MCF 10A (cell line): ENCODE measurements at regions of chr5 and their contacts with region 1.

Region 1: DNA sequence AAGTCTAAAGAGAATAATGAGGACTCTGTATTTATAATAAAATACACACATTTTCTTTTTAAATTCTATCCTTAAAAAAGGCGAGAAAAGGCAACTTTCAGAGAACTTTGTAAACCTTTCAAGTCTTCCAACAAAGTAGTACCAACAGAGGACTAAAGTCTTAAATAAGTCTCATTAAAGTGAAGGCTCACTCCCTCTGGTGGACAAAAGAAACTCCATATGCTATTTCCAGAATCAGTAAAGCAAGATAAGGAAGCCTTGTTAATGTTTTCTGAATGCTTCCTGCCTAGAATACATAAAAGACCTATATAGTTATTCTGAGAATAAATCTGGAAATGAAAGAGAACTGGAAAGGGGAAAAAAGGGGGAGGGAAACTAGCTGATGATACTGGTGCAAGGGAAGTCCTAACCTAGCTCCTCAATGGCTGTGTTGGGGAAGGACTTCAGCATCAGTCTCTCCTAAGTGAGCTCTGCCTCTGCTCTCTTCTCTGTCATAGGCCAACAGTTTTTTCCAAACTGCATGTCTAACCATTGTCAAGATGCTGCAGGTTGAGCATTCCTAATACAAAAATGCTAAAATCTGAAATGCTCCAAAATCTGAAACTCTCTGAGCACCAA is 7.2 kb downstream of the HMGCS1 start:
- DNase-seq: peak; percentile 68
- H3K4me3 Mint-ChIP-seq: no peak overlapping the region
- H3K27ac Mint-ChIP-seq: peak overlapping the region; percentile 54
- H3K4me1 Mint-ChIP-seq: peaks cover 50% of the 10 kb centered on the region
- H3K27me3 Mint-ChIP-seq: no peaks in the 10 kb centered on the region
- CTCF ChIP-seq: peak; percentile 69

Region 2: DNA sequence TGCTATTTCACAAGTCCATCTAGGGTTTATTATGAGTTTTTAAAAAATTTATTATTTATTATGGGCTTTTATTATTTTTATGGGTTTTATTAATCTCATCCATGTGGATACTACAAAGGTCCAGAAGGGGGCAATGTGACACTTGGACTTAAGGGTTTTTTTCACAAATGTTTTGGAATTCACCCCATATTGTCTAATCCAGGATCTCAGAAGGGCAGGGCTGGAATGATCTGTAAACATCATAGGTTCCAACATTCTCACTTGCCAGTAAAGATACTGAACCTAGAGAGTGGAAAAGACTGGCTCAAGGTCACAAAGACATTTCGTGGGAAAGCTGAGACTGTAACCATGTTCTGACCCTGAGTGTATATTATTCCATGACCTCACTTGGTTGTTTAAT is 78.4 kb before region 1 on chr5:
- CTCF ChIA-PET with region 1: interaction called, 10 read pairs
- POLR2A ChIA-PET with region 1: no interaction called
- intact Hi-C with region 1: loop called (anchors 1 kb)
- DNase-seq: peak; percentile 67
- H3K4me3 Mint-ChIP-seq: no peak overlapping the region
- H3K27ac Mint-ChIP-seq: no peak overlapping the region
- H3K4me1 Mint-ChIP-seq: peaks cover 4% of the 10 kb centered on the region
- H3K27me3 Mint-ChIP-seq: no peaks in the 10 kb centered on the region
- CTCF ChIP-seq: peak; percentile 51

Region 3: DNA sequence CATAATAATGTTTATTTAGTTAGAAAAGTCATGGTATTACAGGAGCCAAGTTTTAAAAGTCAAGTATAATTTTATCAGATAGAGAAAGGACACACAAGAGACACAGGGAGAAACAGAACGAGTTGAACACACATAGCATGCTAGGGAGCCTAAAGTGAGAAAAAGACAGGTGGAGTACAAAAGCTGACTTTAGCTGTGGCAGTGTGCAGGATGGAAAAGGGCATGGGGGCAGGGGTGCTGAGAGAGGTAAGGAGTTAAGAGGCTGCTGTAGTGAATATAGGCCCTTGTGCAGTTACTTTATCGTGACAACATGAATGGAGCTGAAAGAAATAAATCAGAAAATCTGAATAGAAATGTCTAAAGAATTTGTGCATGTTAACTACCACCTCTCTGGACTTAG is 10.9 kb before region 1 on chr5:
- CTCF ChIA-PET with region 1: interaction called, 11 read pairs
- POLR2A ChIA-PET with region 1: interaction called, 5 read pairs
- intact Hi-C with region 1: no loop called
- DNase-seq: no peak
- H3K4me3 Mint-ChIP-seq: no peak overlapping the region
- H3K27ac Mint-ChIP-seq: peak overlapping the region; percentile 59
- H3K4me1 Mint-ChIP-seq: peaks cover 12% of the 10 kb centered on the region
- H3K27me3 Mint-ChIP-seq: no peaks in the 10 kb centered on the region
- CTCF ChIP-seq: no peak

Region 4: DNA sequence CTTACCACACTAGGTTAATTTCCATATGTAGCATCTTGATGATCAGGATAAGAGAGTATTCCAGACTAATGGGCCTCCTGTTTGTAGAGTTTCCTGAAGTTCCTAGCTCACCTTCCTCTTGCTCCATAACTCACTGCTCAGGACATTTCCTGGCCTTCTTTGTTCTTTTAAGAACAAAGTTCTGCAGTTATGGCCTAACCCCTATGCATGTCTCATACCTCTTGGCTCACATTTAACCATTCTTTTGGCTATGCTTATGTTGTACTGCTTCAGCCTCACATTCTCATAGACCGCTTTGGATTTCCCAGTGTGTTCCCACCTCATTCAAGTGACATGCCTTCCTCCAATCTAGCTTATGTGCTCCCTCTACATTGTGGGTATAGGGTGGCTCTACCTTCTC is 47.6 kb after region 1 on chr5:
- CTCF ChIA-PET with region 1: no interaction called
- POLR2A ChIA-PET with region 1: no interaction called
- intact Hi-C with region 1: no loop called
- DNase-seq: no peak
- H3K4me3 Mint-ChIP-seq: no peak overlapping the region
- H3K27ac Mint-ChIP-seq: no peak overlapping the region
- H3K4me1 Mint-ChIP-seq: no peaks in the 10 kb centered on the region
- H3K27me3 Mint-ChIP-seq: no peaks in the 10 kb centered on the region
- CTCF ChIP-seq: no peak